ENCODE measurements at regions of chr20 and their contacts with region 1.

Region 1: GRCh38 chr20:25390538-25391528 is at the start of gene ABHD12:
- DNase-seq: peak in 1 of 2 donors; percentile 95
- H3K4me3 ChIP-seq: peak within 1 kb of the TSS; percentile 82 to 84
- H3K27ac ChIP-seq: peak within 1 kb of the TSS; percentile 75
- H3K4me1 ChIP-seq: peaks cover 15% of the 10 kb centered on the region
- H3K27me3 ChIP-seq: no peaks in the 10 kb centered on the region
- CTCF ChIP-seq: no peak
- POLR2A ChIP-seq: peak in 1 of 2 donors; percentile 42
- total RNA-seq, gene ABHD12: 36.6 TPM

Region 2: DNA sequence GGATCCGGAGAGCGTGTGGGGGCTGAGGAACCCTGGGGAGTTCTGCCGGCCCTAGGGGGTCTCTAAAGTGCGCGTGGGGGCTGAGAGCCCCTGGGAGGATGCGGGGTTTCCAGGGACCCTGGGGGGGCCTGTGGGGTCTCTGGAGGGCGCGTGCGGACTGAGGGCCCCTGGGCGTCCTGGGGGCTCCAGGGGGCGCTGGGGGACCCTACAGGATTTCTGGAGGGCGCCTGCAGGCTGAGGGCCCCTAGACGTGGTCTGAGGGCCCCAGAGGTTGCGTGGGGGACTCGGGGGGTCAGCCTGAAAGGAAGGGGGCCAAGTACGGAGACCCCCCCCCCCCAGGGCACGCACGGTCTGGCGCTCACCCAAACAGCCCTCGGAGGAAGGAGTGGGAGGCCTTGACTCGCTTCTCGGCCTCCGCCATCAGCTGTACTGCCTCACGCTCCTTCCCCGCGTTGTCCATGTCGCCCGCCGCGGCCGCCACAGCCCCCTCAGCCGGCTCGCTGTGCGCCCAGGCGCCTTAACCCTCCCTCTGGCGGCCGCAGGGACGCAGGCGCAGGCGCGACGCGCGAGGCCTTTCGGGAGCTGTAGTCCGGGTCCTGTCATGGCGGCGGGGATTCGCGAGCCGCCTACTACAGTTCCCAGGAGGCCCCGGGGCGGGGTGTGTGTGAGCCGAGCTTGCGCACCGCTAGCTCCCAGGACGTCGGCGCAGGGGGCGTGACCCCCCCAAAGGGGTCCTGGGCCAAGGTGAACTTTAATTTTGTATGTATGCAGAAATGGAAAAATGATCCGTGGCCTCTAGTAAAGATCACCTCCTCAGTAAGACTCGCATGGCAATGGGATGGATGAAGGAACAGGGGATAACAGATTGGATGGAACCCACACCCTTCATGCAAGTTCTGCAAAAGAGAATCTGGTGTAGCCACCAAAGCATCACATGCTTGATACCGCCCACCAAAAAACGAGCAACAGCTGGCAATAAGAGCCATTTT is 1969.6 kb before region 1 on chr20 and contains the start of gene NAPB:
- intact Hi-C with region 1: loop called (anchors 5 kb)
- DNase-seq: peak in 1 of 2 donors; percentile 89
- H3K4me3 ChIP-seq: peak within 1 kb of the TSS; percentile 89 to 98
- H3K27ac ChIP-seq: peak within 1 kb of the TSS; percentile 97
- H3K4me1 ChIP-seq: peaks cover 34% of the 10 kb centered on the region
- H3K27me3 ChIP-seq: no peaks in the 10 kb centered on the region
- CTCF ChIP-seq: peak in 1 of 3 experiments; percentile 78
- POLR2A ChIP-seq: peak in 1 of 2 donors; percentile 85
- total RNA-seq, gene NAPB: 28.5 TPM

Region 3: GRCh38 chr20:24981790-24982189 is 409.0 kb before region 1 on chr20:
- intact Hi-C with region 1: no loop called
- DNase-seq: peak in 1 of 2 donors; percentile 75
- H3K4me3 ChIP-seq: no peak overlapping the region
- H3K27ac ChIP-seq: no peak overlapping the region
- H3K4me1 ChIP-seq: no peaks in the 10 kb centered on the region
- H3K27me3 ChIP-seq: no peaks in the 10 kb centered on the region
- CTCF ChIP-seq: no peak
- POLR2A ChIP-seq: no peak

Region 4: GRCh38 chr20:25072226-25072811 is 318.5 kb before region 1 on chr20:
- intact Hi-C with region 1: no loop called
- DNase-seq: peak; percentile 49 to 77
- H3K4me3 ChIP-seq: no peak overlapping the region
- H3K27ac ChIP-seq: no peak overlapping the region
- H3K4me1 ChIP-seq: peaks cover 3% of the 10 kb centered on the region
- H3K27me3 ChIP-seq: no peaks in the 10 kb centered on the region
- CTCF ChIP-seq: no peak
- POLR2A ChIP-seq: no peak

Region 5: GRCh38 chr20:25299806-25300205 is 91.0 kb before region 1 on chr20:
- intact Hi-C with region 1: loop called (anchors 5 kb)
- DNase-seq: no peak
- H3K4me3 ChIP-seq: no peak overlapping the region
- H3K27ac ChIP-seq: no peak overlapping the region
- H3K4me1 ChIP-seq: peaks cover 13% of the 10 kb centered on the region
- H3K27me3 ChIP-seq: no peaks in the 10 kb centered on the region
- CTCF ChIP-seq: no peak
- POLR2A ChIP-seq: no peak